HCT116 (cell line): ENCODE measurements at regions of chr18 and their contacts with region 1.

Region 1: DNA sequence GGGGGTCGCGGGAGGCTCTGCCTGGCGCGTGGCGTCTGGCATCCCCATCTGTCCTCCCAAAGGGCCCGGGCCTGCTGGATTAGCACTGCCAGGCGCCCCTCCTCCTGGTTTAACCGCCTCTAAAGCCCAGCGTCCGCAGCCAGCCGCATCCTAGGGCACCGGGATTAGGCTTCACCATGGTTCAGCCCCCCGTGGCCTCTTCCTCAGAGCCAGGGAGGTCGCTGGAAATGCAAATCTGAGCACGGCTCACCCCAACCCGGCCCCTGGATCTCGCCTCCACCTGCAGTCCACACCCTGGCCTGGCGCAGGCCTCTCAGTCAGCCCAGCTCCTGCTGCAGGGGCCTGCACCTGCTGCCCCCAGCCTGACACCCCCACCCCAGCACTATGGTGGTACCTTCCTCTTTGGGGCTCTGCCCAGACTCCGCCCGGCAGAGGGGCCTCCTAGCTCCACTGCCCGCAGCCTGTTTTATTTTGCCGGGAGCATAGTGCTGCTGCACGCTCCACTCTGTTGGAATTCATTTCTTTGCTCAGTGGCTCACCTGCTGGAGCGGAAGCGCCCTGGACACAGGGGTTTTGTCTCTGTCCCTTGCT is 13.2 kb downstream of the PRELID3A start:
- DNase-seq: no peak
- ATAC-seq: no peak
- H3K4me3 ChIP-seq: no peak overlapping the region
- H3K27ac ChIP-seq: no peak overlapping the region
- H3K4me1 ChIP-seq: peaks cover 4 to 9% of the 10 kb centered on the region in 2 experiments; a peak in 2 of 4 replicates
- H3K27me3 ChIP-seq: no peaks in the 10 kb centered on the region
- CTCF ChIP-seq: no peak
- POLR2A ChIP-seq: no peak
- RAD21 ChIP-seq: no peak

Region 2: GRCh38 chr18:12391618-12392165 is 29.2 kb before region 1 on chr18:
- CTCF ChIA-PET with region 1: interaction called, 3 read pairs
- POLR2A ChIA-PET with region 1: no interaction called
- RAD21 ChIA-PET with region 1: interaction called in 1 of 2 experiments, 4 read pairs
- intact Hi-C with region 1: loop called (anchors 2 kb)
- DNase-seq: peak; percentile 52
- ATAC-seq: peak; percentile 69
- H3K4me3 ChIP-seq: no peak overlapping the region
- H3K27ac ChIP-seq: no peak overlapping the region
- H3K4me1 ChIP-seq: peaks cover 10 to 25% of the 10 kb centered on the region in 2 experiments; a peak in 3 of 4 replicates
- H3K27me3 ChIP-seq: no peaks in the 10 kb centered on the region
- CTCF ChIP-seq: peak; percentile 87 to 95 (median 92)
- POLR2A ChIP-seq: no peak
- RAD21 ChIP-seq: peak; percentile 95

Region 3: DNA sequence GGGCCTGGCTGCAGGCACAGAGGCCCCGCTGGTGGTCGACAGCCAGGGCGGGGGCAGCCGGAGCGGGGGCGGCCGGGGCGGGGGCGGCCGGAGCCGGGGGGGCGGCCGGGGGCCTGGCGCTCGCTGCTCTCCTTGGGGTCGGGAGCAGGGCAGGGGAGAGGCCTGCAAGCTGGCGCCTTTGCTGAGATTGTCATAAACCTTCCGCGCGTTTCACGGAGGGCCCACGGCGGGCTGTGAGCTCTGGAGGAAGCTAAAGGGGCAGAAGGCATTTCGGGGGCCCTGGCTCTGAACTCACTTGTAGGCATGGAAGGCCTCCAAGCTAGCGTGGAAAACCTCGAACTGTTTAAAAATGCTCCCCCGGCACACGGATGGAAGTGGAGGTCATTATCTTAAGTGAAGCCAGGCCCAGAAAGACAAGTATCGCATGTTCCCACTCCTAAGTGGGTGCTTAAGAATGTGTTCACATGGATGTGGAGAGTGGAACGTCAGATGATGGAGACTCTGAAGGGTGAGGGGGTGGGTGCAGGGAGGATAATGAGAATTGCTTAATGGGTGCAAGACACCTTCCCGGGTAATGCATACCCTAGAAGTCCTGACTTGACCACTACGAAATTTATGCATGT is 12.6 kb before region 1 on chr18:
- CTCF ChIA-PET with region 1: interaction called, 5 read pairs
- POLR2A ChIA-PET with region 1: interaction called, 11 read pairs
- RAD21 ChIA-PET with region 1: interaction called in 1 of 2 experiments, 3 read pairs
- intact Hi-C with region 1: no loop called
- DNase-seq: no peak
- ATAC-seq: no peak; the same call in none of the 2 replicates
- H3K4me3 ChIP-seq: peak overlapping the region; percentile 54 to 83
- H3K27ac ChIP-seq: peak overlapping the region; percentile 77
- H3K4me1 ChIP-seq: peaks cover 17 to 37% of the 10 kb centered on the region in 2 experiments
- H3K27me3 ChIP-seq: peaks cover 17% of the 10 kb centered on the region; the same call in 1 of the 2 replicates
- CTCF ChIP-seq: no peak
- POLR2A ChIP-seq: no peak
- RAD21 ChIP-seq: no peak

Region 4: GRCh38 chr18:12531749-12532148 is 110.8 kb after region 1 on chr18:
- CTCF ChIA-PET with region 1: no interaction called
- POLR2A ChIA-PET with region 1: no interaction called
- RAD21 ChIA-PET with region 1: no interaction called
- intact Hi-C with region 1: no loop called
- DNase-seq: no peak
- ATAC-seq: no peak
- H3K4me3 ChIP-seq: no peak overlapping the region
- H3K27ac ChIP-seq: no peak overlapping the region
- H3K4me1 ChIP-seq: no peaks in the 10 kb centered on the region
- H3K27me3 ChIP-seq: no peaks in the 10 kb centered on the region
- CTCF ChIP-seq: 0 out of 6 replicates have a peak, but pooled peaks of 1 of the 3 experiments have one; percentile 9
- POLR2A ChIP-seq: no peak
- RAD21 ChIP-seq: no peak